ENCODE measurements at regions of chr1 and their contacts with region 1.

Region 1: GRCh38 chr1:31831397-31832378 is 15.9 kb upstream of the SPOCD1 start:
- DNase-seq: no peak
- ATAC-seq: no peak
- H3K4me3 ChIP-seq: no peak overlapping the region
- H3K4me3 Mint-ChIP-seq: no peak overlapping the region
- H3K27ac ChIP-seq: no peak overlapping the region
- H3K27ac Mint-ChIP-seq: peak overlapping the region in 2 of 9 donors; percentile 5 to 21
- H3K4me1 ChIP-seq: peaks cover 15 to 25% of the 10 kb centered on the region in 2 donors
- H3K4me1 Mint-ChIP-seq: peaks cover 17 to 55% (median 39%) of the 10 kb centered on the region in 7 donors
- H3K27me3 ChIP-seq: no peaks in the 10 kb centered on the region
- H3K27me3 Mint-ChIP-seq: no peaks in the 10 kb centered on the region

Region 2: DNA sequence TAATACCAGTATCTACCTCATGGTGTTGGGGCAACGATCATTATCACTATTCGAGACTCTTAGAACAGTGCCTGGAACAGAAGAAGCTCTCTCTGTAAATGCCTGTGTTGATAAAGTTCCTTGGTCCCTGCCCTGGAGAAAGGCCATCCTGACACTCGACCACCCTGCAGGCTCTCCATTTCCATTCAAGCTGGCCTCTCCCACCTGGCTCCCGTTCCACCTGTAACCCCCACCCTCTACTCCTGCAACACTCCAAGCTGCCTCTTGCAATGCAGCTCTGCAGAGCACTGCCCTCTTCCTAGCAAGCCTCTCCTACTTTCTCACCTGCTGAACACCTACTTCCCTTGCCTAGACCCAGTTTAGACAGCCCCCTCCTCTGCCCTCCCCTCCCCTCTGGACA is 22.0 kb before region 1 on chr1:
- CTCF ChIA-PET with region 1: no interaction called
- POLR2A ChIA-PET with region 1: no interaction called
- intact Hi-C with region 1: no loop called
- DNase-seq: peak in 1 of 9 donors; percentile 11
- ATAC-seq: no peak
- H3K4me3 ChIP-seq: no peak overlapping the region
- H3K4me3 Mint-ChIP-seq: no peak overlapping the region
- H3K27ac ChIP-seq: no peak overlapping the region
- H3K27ac Mint-ChIP-seq: peak overlapping the region in 1 of 9 donors; percentile 5
- H3K4me1 ChIP-seq: no peaks in the 10 kb centered on the region
- H3K4me1 Mint-ChIP-seq: peaks cover 0 to 3% (median 0%) of the 10 kb centered on the region in 7 donors
- H3K27me3 ChIP-seq: no peaks in the 10 kb centered on the region
- H3K27me3 Mint-ChIP-seq: peaks cover 0 to 17% (median 0%) of the 10 kb centered on the region in 5 donors

Region 3: DNA sequence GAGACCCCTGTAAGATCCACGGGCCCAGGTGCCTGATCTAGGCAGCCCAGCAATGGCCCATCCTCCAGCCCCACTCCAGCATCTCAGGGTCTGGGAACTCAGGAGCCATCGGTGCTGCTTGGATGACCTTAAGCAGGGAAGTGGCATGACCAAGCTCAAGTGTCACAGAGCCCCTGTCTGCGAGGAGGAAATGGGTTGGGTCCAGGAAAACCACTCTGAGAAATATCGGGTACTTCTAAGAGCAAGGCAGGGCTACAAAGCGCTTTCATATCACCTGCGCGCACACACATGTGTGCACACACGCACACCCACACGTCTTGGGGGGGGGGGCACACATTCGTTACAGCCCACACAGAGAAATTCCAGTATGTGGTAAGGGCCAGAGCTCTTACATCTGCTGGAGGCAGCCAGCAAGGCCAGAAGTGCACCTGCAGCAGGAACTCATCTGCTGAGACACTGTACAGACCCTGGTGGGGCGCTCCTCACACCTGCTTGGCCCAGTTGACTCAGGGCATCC is 16.8 kb after region 1 on chr1:
- CTCF ChIA-PET with region 1: interaction called, 3 read pairs
- POLR2A ChIA-PET with region 1: interaction called, 8 read pairs
- intact Hi-C with region 1: loop called in 1 of 2 experiments (anchors 1 kb)
- DNase-seq: peak in 8 of 9 donors; percentile 37 to 69 (median 59)
- ATAC-seq: peak; percentile 89
- H3K4me3 ChIP-seq: peak overlapping the region; percentile 50
- H3K4me3 Mint-ChIP-seq: peak overlapping the region; percentile 58 to 97 (median 76)
- H3K27ac ChIP-seq: peak overlapping the region; percentile 69
- H3K27ac Mint-ChIP-seq: peak overlapping the region; percentile 66 to 98 (median 90)
- H3K4me1 ChIP-seq: peaks cover 18 to 48% of the 10 kb centered on the region in 2 donors
- H3K4me1 Mint-ChIP-seq: peaks cover 48 to 77% (median 64%) of the 10 kb centered on the region in 7 donors
- H3K27me3 ChIP-seq: no peaks in the 10 kb centered on the region
- H3K27me3 Mint-ChIP-seq: no peaks in the 10 kb centered on the region

Region 4: DNA sequence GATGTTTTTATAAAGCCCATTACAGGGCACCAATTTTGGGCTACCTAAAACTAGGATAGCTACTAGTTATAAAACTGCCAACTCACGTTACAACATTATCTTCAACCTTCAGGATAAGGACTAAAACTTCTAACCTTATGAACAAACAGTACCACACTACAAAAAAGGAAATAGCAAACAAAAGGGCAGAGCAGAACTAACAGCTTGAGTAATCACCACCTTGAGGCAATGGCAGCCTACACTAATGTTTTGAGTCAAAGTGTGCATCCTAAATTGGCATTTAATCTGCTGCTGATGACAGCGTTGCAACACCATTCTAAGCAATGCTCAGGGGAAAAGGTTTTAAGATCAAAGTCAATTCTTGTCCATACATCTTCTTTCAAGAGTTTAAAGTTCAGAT is 79.2 kb after region 1 on chr1:
- CTCF ChIA-PET with region 1: no interaction called
- POLR2A ChIA-PET with region 1: no interaction called
- intact Hi-C with region 1: no loop called
- DNase-seq: no peak
- ATAC-seq: peak; percentile 41
- H3K4me3 ChIP-seq: no peak overlapping the region
- H3K4me3 Mint-ChIP-seq: peak overlapping the region in 5 of 10 donors; percentile 1 to 43 (median 20)
- H3K27ac ChIP-seq: no peak overlapping the region
- H3K27ac Mint-ChIP-seq: peak overlapping the region; percentile 19 to 78 (median 61)
- H3K4me1 ChIP-seq: peaks cover 27 to 40% of the 10 kb centered on the region in 2 donors
- H3K4me1 Mint-ChIP-seq: peaks cover 34 to 61% (median 58%) of the 10 kb centered on the region in 7 donors
- H3K27me3 ChIP-seq: no peaks in the 10 kb centered on the region
- H3K27me3 Mint-ChIP-seq: no peaks in the 10 kb centered on the region